CD8-positive, alpha-beta memory T cell (primary cell): ENCODE measurements at regions of chr4 and their contacts with region 1.

Region 1: DNA sequence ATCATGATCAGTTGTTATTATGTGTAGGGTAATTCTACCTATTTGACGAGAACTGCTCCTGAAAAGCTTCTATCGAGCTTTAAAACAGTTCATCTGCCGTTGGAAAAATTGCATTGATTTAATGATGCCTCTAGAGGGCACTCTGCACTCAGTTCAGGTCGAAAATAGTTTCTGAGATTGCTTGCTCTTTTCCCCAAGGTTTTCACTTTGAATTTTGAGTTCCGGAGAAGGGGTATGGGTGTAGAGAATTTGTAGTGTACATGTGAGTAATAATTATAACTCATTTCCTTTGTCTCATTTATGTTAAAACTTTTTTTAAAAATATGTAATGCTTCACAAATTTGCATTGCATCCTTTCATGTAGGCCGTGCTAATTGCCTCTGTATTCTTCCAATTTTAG is 28.4 kb upstream of the TNIP3 start:
- DNase-seq: peak in 2 of 5 donors; percentile 37 to 38
- H3K4me3 ChIP-seq: peak overlapping the region; percentile 52
- H3K4me3 Mint-ChIP-seq: peak overlapping the region; percentile 14 to 79 (median 69)
- H3K27ac ChIP-seq: no peak overlapping the region
- H3K27ac Mint-ChIP-seq: peak overlapping the region in 7 of 8 donors; percentile 43 to 90 (median 77)
- H3K4me1 ChIP-seq: peaks cover 55% of the 10 kb centered on the region
- H3K4me1 Mint-ChIP-seq: peaks cover 59 to 80% (median 77%) of the 10 kb centered on the region in 3 donors
- H3K27me3 ChIP-seq: no peaks in the 10 kb centered on the region
- H3K27me3 Mint-ChIP-seq: no peaks in the 10 kb centered on the region

Region 2: GRCh38 chr4:121151942-121152341 is 40.5 kb before region 1 on chr4:
- CTCF ChIA-PET with region 1: interaction called, 11 read pairs
- POLR2A ChIA-PET with region 1: no interaction called
- DNase-seq: no peak
- H3K4me3 ChIP-seq: no peak overlapping the region
- H3K4me3 Mint-ChIP-seq: no peak overlapping the region
- H3K27ac ChIP-seq: no peak overlapping the region
- H3K27ac Mint-ChIP-seq: peak overlapping the region in 1 of 8 donors; percentile 31
- H3K4me1 ChIP-seq: peaks cover 62% of the 10 kb centered on the region
- H3K4me1 Mint-ChIP-seq: peaks cover 53 to 63% (median 60%) of the 10 kb centered on the region in 3 donors
- H3K27me3 ChIP-seq: no peaks in the 10 kb centered on the region
- H3K27me3 Mint-ChIP-seq: no peaks in the 10 kb centered on the region

Region 3: GRCh38 chr4:121182296-121182695 is 10.2 kb before region 1 on chr4:
- CTCF ChIA-PET with region 1: interaction called, 31 read pairs
- POLR2A ChIA-PET with region 1: interaction called, 4 read pairs
- DNase-seq: peak in 2 of 5 donors; percentile 47 to 66
- H3K4me3 ChIP-seq: peak overlapping the region; percentile 78
- H3K4me3 Mint-ChIP-seq: peak overlapping the region; percentile 76 to 87 (median 85)
- H3K27ac ChIP-seq: peak overlapping the region; percentile 83
- H3K27ac Mint-ChIP-seq: peak overlapping the region; percentile 89 to 99 (median 94)
- H3K4me1 ChIP-seq: peaks cover 56% of the 10 kb centered on the region
- H3K4me1 Mint-ChIP-seq: peaks cover 68 to 94% (median 88%) of the 10 kb centered on the region in 3 donors
- H3K27me3 ChIP-seq: no peaks in the 10 kb centered on the region
- H3K27me3 Mint-ChIP-seq: no peaks in the 10 kb centered on the region

Region 4: DNA sequence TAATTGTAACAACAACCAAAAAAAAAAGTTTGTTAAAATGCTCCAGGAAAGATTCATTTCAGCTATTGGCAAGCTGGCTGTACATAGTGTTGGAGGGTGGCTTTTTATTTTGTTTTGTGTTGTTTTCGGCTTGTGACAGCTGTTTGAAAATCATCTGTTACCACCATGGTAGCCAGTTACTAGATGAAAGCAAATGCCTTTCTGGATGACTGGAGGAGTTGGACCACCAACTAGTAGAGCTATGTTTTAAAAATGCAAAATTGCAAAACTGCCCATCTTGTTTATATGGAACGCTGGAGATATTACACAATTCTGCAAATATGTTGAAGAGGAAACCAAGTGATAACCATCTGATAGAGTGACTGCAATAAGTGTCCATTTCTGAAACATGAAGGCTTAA is 24.9 kb after region 1 on chr4:
- CTCF ChIA-PET with region 1: interaction called, 39 read pairs
- POLR2A ChIA-PET with region 1: interaction called, 3 read pairs
- DNase-seq: no peak
- H3K4me3 ChIP-seq: no peak overlapping the region
- H3K4me3 Mint-ChIP-seq: peak overlapping the region in 3 of 7 donors; percentile 0 to 73 (median 4)
- H3K27ac ChIP-seq: no peak overlapping the region
- H3K27ac Mint-ChIP-seq: peak overlapping the region in 7 of 8 donors; percentile 9 to 96 (median 93)
- H3K4me1 ChIP-seq: peaks cover 35% of the 10 kb centered on the region
- H3K4me1 Mint-ChIP-seq: peaks cover 49 to 88% (median 69%) of the 10 kb centered on the region in 3 donors
- H3K27me3 ChIP-seq: no peaks in the 10 kb centered on the region
- H3K27me3 Mint-ChIP-seq: no peaks in the 10 kb centered on the region

Region 5: GRCh38 chr4:121243485-121243884 is 51.0 kb after region 1 on chr4:
- CTCF ChIA-PET with region 1: interaction called, 78 read pairs
- POLR2A ChIA-PET with region 1: interaction called, 3 read pairs
- DNase-seq: no peak
- H3K4me3 ChIP-seq: peak overlapping the region; percentile 16
- H3K4me3 Mint-ChIP-seq: peak overlapping the region; percentile 74 to 89 (median 85)
- H3K27ac ChIP-seq: no peak overlapping the region
- H3K27ac Mint-ChIP-seq: peak overlapping the region in 6 of 8 donors; percentile 21 to 83 (median 66)
- H3K4me1 ChIP-seq: peaks cover 8% of the 10 kb centered on the region
- H3K4me1 Mint-ChIP-seq: peaks cover 13 to 32% (median 21%) of the 10 kb centered on the region in 3 donors
- H3K27me3 ChIP-seq: no peaks in the 10 kb centered on the region
- H3K27me3 Mint-ChIP-seq: no peaks in the 10 kb centered on the region

Region 6: DNA sequence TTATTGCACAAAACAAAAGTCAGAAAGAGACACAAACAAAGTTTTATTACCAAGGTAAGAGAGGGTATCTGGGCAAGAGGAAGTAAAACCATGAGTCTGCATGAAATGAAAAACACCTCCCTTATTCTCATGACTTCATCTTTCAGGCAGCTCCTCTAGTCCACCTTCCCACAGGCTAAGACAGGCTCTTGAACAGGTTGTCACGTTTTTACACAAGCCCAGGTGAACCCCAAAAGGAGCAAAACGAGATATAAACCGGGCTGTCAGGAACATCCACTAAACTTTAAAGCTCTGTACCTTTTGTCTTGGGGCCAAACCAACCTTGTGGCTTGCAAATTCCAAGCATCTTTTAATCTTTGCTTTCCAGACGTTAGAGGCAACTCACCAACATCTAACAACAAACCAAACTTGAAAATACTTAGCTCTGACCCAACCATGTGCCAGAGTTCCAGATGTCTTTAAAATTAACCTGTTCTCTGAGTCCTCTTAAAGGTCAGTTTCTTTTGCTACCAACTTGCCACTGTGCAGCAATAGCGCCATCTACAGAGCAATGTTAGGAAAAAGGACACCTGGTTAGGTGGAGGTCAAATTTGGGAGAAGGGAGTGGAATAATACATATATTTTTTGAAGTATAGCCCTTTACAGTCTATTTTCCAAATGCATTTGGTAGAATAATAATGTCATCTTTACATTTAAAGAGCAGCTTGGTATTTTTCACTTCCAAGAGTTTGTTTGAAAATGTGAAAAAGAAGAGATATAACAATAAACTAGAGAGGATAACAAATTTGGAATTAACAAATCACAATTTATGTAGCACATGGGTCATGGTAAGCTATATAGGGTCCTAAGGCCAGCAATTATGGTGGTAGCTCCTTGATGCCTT is 115.2 kb after region 1 on chr4:
- CTCF ChIA-PET with region 1: interaction called, 43 read pairs
- POLR2A ChIA-PET with region 1: no interaction called
- DNase-seq: peak; percentile 5 to 56 (median 33)
- H3K4me3 ChIP-seq: no peak overlapping the region
- H3K4me3 Mint-ChIP-seq: peak overlapping the region in 3 of 7 donors; percentile 27 to 50 (median 28)
- H3K27ac ChIP-seq: no peak overlapping the region
- H3K27ac Mint-ChIP-seq: peak overlapping the region in 6 of 8 donors; percentile 13 to 72 (median 62)
- H3K4me1 ChIP-seq: peaks cover 8% of the 10 kb centered on the region
- H3K4me1 Mint-ChIP-seq: peaks cover 13 to 18% (median 15%) of the 10 kb centered on the region in 3 donors
- H3K27me3 ChIP-seq: no peaks in the 10 kb centered on the region
- H3K27me3 Mint-ChIP-seq: no peaks in the 10 kb centered on the region